ENCODE measurements at regions of chr19 and their contacts with region 1.

Region 1: DNA sequence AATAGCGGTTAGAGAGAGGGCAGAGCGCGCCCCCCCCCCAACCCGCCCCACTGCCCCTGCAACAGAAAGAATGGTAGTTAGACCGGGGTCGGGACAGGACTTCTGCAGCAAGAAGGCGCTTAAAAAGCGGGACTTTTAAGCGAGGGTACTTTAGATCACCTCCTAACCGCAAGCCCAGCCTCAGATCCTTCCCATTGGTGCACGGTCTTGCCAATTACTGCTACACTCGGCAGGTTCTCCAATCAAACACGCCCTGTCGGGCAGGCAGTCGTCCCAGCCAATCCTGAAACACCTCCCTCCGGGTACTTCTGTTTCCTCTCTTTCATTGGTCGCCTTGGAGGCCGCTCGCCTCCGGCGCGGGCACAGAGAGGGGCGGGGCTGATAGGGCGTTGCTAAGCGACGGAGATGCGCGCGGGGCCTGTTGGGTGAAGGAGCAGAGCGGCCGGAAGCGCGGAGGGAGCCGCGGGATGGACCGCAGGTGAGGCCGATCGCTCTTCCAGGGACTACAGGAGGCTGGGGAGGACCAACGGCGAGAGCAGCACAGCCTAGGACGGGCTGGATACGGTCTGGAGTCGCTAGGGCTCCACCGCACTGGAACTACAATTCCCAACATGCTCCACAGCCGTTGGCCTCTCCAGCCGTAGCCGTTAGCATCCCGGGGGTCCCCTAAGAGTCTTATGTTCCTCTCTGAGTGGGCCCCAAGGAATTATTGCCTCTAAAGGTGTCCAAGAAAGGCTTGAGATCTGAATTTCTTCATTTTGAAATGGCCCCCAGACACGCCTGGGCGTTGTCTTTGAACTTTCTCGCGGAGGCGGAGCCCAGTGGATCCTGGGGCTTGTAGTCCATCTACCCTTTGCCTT is at the start of gene PROSER3:
- DNase-seq: peak; percentile 97 to 98
- H3K4me3 ChIP-seq: peak within 1 kb of the TSS; percentile 95 to 100 (median 98)
- H3K27ac ChIP-seq: peak within 1 kb of the TSS; percentile 77; the same call in 1 of the 2 replicates
- H3K4me1 ChIP-seq: peaks cover 0 to 18% (median 11%) of the 10 kb centered on the region in 4 experiments; a peak in 5 of 7 replicates
- H3K27me3 ChIP-seq: peaks cover 0 to 17% (median 11%) of the 10 kb centered on the region in 4 experiments; a peak in 5 of 7 replicates
- CTCF ChIP-seq: no peak
- EP300 ChIP-seq: no peak
- POLR2A ChIP-seq: peak in 1 of 2 experiments; percentile 77; a peak in 2 of 3 replicates
- RAD21 ChIP-seq: no peak
- total RNA-seq, gene PROSER3: 20.8 and 28.9 TPM in 2 replicates

Region 2: DNA sequence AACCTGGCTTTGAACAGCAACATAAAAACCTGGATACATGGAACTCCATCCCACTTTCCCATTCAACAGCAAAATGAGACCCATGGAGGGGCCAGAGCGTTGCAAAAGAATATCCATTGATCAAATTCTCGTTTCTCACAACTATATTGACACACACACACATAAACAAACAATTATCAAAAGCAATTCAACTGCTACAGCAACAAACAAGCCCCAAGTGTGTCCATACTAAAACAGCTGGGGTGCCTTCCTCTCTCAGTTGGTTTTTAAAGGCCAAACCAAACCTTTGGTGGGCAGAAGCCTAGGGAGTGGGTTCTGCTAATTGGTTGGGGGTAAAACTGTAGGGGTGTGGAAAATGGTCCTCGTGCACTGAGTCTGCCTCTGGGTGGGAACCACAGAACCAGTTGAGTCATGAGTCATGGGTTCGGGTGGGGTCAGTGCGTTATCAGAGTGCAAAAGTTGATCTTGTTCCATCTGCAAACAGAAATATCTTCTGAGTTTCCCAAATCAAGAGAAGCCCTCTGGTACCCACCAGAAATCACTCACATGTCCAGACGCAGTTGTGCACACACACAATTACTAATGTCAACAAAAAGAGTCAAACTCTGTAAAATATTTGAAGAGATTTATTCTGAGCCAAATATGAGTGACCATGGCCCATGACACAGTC is 368.7 kb before region 1 on chr19:
- CTCF ChIA-PET with region 1: no interaction called
- POLR2A ChIA-PET with region 1: no interaction called
- DNase-seq: peak in 1 of 2 experiments; percentile 1
- H3K4me3 ChIP-seq: no peak overlapping the region
- H3K27ac ChIP-seq: no peak overlapping the region
- H3K4me1 ChIP-seq: no peaks in the 10 kb centered on the region
- H3K27me3 ChIP-seq: 0 out of 7 replicates have a peak, but pooled peaks cover 0 to 2% (median 0%) of the 10 kb centered on the region in 4 experiments
- CTCF ChIP-seq: no peak
- EP300 ChIP-seq: no peak
- POLR2A ChIP-seq: no peak
- RAD21 ChIP-seq: no peak

Region 3: DNA sequence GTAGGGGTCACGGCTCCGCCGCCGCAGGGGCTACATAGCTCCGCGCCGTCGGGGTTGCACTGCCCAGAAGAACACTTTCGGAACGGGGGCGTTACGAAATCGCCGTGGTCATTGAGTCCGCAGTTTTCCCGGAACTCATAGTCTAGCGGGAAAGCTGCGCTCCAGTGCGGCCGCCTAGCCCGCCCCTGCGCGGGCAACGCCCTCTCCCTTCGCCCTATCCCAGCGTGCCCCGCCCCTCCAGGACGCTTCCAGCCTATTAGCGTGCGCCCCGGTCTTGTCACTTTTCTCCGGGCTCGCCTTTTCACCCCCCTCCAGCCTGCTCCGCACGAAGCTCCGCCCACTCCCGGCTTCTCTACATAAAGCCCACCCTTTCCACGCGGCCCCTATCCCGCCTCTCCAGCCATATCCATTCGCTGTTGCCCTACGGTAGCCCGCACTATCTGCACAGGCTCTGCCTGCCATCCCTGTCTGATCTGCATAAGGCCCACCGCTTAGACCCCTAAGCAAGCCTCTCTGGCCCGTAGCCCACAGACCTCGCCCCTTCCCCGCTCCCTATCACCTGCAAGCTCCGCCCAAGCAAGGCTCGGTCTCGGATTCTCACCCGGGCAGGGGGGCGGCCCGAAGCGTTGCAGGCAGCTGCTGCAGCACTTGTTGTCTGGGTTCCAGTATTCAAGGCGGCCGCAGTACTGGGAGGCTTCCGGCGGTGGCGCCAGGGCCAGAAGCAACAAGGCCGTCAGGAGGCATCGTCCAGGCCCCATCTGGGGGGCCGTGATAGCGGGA is 17.4 kb before region 1 on chr19:
- CTCF ChIA-PET with region 1: interaction called, 9 read pairs
- POLR2A ChIA-PET with region 1: interaction called, 23 read pairs
- DNase-seq: peak; percentile 93 to 96
- H3K4me3 ChIP-seq: peak overlapping the region; percentile 72 to 86 (median 78)
- H3K27ac ChIP-seq: peak overlapping the region; percentile 69; the same call in 1 of the 2 replicates
- H3K4me1 ChIP-seq: peaks cover 0 to 6% (median 3%) of the 10 kb centered on the region in 4 experiments; a peak in 3 of 7 replicates
- H3K27me3 ChIP-seq: no peaks in the 10 kb centered on the region
- CTCF ChIP-seq: peak; percentile 14 to 40 (median 31)
- EP300 ChIP-seq: peak in 1 of 2 experiments; percentile 43; a peak in 1 of 3 replicates
- POLR2A ChIP-seq: no peak; a peak in 2 of 3 replicates
- RAD21 ChIP-seq: peak in 1 of 2 experiments; percentile 24; a peak in 2 of 4 replicates

Region 4: GRCh38 chr19:35805526-35806102 is 47.6 kb after region 1 on chr19:
- CTCF ChIA-PET with region 1: no interaction called
- POLR2A ChIA-PET with region 1: no interaction called
- DNase-seq: no peak
- H3K4me3 ChIP-seq: no peak overlapping the region
- H3K27ac ChIP-seq: no peak overlapping the region
- H3K4me1 ChIP-seq: peaks cover 0 to 2% (median 0%) of the 10 kb centered on the region in 4 experiments; a peak in 2 of 7 replicates
- H3K27me3 ChIP-seq: no peaks in the 10 kb centered on the region; a peak in 1 of 7 replicates
- CTCF ChIP-seq: no peak
- EP300 ChIP-seq: no peak
- POLR2A ChIP-seq: no peak
- RAD21 ChIP-seq: no peak

Measured in H1 (cell line).